WTC11 (cell line): ENCODE measurements at regions of chr17 and their contacts with region 1.

Region 1: GRCh38 chr17:75827252-75828115 is 16.7 kb downstream of the UNC13D start:
- DNase-seq: peak; percentile 91
- ATAC-seq: peak; percentile 74
- H3K4me3 Mint-ChIP-seq: peak overlapping the region; percentile 47
- H3K27ac Mint-ChIP-seq: peak overlapping the region; percentile 63; the same call in 1 of the 2 replicates
- H3K4me1 Mint-ChIP-seq: peaks cover 27% of the 10 kb centered on the region
- H3K27me3 Mint-ChIP-seq: no peaks in the 10 kb centered on the region
- CTCF ChIP-seq: peak; percentile 71

Region 2: DNA sequence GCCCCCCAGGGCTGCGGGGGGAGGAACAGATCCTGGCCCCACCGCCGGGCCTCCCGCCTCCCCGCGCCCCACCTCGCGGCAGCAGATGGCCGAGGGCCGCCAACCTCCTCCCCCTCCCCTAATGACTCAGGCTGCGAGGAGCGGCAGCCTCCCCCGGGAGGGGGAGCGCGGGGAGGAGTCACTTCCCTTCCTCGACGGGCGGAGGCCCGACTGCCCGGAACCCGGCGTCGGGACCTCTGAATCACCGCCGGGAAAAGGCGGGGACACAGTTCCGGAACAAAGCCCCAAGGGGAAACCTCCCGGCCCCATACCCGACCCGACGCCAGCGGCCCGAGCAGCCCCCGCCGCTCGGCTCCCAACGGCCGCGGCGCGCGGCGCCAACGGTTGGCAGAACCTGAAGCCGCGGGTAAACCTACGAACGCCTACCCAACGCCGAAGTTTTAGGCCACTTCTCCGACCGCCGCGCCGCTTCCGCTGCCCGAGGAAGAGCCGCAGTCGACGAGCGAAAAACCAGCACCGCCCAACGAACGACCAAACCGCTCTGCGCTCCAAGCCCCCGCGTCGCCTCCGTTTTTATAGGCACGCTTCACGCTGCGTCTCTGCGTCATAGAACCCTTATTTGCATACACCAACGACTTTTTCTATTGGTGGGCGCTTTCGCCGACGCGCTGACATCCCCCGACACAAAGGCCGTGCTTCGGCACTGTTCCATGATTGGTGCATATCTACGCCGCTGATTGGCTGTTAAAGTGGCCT is 48.1 kb before region 1 on chr17:
- CTCF ChIA-PET with region 1: interaction called, 27 read pairs
- POLR2A ChIA-PET with region 1: interaction called, 4 read pairs
- DNase-seq: peak; percentile 94
- ATAC-seq: peak; percentile 85
- H3K4me3 Mint-ChIP-seq: peak overlapping the region; percentile 94
- H3K27ac Mint-ChIP-seq: peak overlapping the region; percentile 99
- H3K4me1 Mint-ChIP-seq: peaks cover 46% of the 10 kb centered on the region
- H3K27me3 Mint-ChIP-seq: peaks cover 4% of the 10 kb centered on the region
- CTCF ChIP-seq: 0 out of 2 replicates have a peak, but pooled peaks have one; percentile 11

Region 3: DNA sequence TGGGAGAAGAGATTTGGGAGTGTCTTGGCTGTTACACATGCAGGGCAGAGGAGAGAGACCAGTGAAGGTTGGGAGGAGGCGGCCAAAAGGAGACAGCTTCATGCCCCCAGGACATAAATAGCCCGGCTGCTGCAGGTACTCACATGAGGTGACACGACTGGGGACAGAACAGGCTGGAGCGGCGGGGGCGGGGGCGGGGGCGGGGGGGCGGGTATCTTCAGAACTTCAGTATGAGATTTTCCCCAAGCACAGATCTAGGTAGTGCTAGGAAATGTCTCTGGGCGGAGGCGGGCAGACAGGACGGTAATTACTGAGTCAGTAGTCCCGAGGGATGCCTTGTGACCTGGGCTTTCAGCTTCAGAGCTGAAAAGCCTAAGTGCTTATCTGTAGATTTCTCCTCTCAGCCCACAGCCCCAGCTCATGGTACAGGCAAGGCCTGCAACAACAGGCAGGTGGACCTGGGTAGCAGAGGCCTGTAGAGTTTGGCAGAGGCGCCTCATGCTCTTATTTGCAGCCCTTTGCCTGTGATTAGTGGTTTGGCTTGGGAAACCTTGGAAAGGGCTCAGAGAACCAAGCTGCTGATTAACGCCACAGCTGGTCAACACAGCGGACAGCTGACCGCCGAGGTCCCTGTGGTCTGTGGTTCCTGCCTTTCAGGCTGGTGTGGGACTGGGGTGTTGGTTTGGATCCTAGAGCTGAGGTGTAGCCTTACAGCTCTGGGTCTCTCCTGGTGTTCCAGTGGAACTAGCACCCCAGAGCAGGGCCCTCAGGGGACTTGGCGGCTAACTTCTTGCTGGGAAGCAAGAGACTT is 18.4 kb before region 1 on chr17:
- CTCF ChIA-PET with region 1: interaction called, 22 read pairs
- POLR2A ChIA-PET with region 1: no interaction called
- DNase-seq: no peak
- ATAC-seq: peak; percentile 17; the same call in 1 of the 2 replicates
- H3K4me3 Mint-ChIP-seq: no peak overlapping the region
- H3K27ac Mint-ChIP-seq: peak overlapping the region; percentile 88; the same call in 1 of the 2 replicates
- H3K4me1 Mint-ChIP-seq: no peaks in the 10 kb centered on the region
- H3K27me3 Mint-ChIP-seq: no peaks in the 10 kb centered on the region
- CTCF ChIP-seq: no peak

Region 4: GRCh38 chr17:75864448-75864871 is 37.0 kb after region 1 on chr17:
- CTCF ChIA-PET with region 1: interaction called, 35 read pairs
- POLR2A ChIA-PET with region 1: interaction called, 3 read pairs
- DNase-seq: no peak
- ATAC-seq: peak; percentile 92
- H3K4me3 Mint-ChIP-seq: no peak overlapping the region
- H3K27ac Mint-ChIP-seq: peak overlapping the region; percentile 41; the same call in 1 of the 2 replicates
- H3K4me1 Mint-ChIP-seq: peaks cover 18% of the 10 kb centered on the region
- H3K27me3 Mint-ChIP-seq: peaks cover 2% of the 10 kb centered on the region; the same call in 1 of the 2 replicates
- CTCF ChIP-seq: no peak

Region 5: GRCh38 chr17:75896415-75897159 is 69.1 kb after region 1 on chr17 and contains the start of gene TRIM65:
- CTCF ChIA-PET with region 1: interaction called, 22 read pairs
- POLR2A ChIA-PET with region 1: no interaction called
- DNase-seq: peak; percentile 73
- ATAC-seq: peak; percentile 60
- H3K4me3 Mint-ChIP-seq: peak within 1 kb of the TSS; percentile 82
- H3K27ac Mint-ChIP-seq: peak within 1 kb of the TSS; percentile 88
- H3K4me1 Mint-ChIP-seq: peaks cover 26% of the 10 kb centered on the region
- H3K27me3 Mint-ChIP-seq: no peaks in the 10 kb centered on the region
- CTCF ChIP-seq: no peak
- total RNA-seq, gene TRIM65: 51.3 to 56.4 TPM (median 51.4 TPM) in 3 replicates